ENCODE measurements at regions of chr6 and their contacts with region 1.

Region 1: GRCh38 chr6:144215932-144216667 is 65.8 kb downstream of the STX11 start:
- DNase-seq: peak; percentile 94 to 96
- H3K4me3 ChIP-seq: peak overlapping the region; percentile 33 to 50 (median 37)
- H3K27ac ChIP-seq: peak overlapping the region; percentile 95 to 100 (median 98)
- H3K4me1 ChIP-seq: peaks cover 35 to 37% of the 10 kb centered on the region in 2 donors
- H3K27me3 ChIP-seq: no peaks in the 10 kb centered on the region
- CTCF ChIP-seq: peak; percentile 55 to 83 (median 73)
- POLR2A ChIP-seq: peak in 1 of 2 donors; percentile 82

Region 2: GRCh38 chr6:143792402-143793279 is 423.5 kb before region 1 on chr6:
- intact Hi-C with region 1: no loop called
- DNase-seq: no peak
- H3K4me3 ChIP-seq: no peak overlapping the region
- H3K27ac ChIP-seq: no peak overlapping the region
- H3K4me1 ChIP-seq: no peaks in the 10 kb centered on the region
- H3K27me3 ChIP-seq: no peaks in the 10 kb centered on the region
- CTCF ChIP-seq: no peak
- POLR2A ChIP-seq: no peak

Region 3: DNA sequence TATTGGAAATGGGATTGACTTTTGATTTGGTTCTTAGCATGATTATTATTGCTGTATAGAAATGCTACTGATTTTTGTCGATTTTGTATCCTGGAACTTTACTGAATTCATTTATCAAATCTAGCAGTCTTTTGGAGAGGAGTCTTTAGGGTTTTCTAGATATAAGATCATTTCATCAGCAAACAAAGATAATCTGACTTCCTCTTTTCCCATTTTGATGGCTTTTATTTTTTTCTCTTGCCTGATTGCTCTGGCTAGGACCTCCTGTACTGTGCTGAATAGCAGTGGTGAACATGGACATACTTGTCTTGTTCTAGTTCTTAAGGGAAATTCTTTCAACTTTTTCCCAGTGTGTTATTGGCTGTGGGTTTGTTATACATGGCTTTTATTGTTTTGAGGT is 287.2 kb before region 1 on chr6:
- intact Hi-C with region 1: no loop called
- DNase-seq: no peak
- H3K4me3 ChIP-seq: no peak overlapping the region
- H3K27ac ChIP-seq: no peak overlapping the region
- H3K4me1 ChIP-seq: no peaks in the 10 kb centered on the region
- H3K27me3 ChIP-seq: no peaks in the 10 kb centered on the region
- CTCF ChIP-seq: no peak
- POLR2A ChIP-seq: no peak

Region 4: DNA sequence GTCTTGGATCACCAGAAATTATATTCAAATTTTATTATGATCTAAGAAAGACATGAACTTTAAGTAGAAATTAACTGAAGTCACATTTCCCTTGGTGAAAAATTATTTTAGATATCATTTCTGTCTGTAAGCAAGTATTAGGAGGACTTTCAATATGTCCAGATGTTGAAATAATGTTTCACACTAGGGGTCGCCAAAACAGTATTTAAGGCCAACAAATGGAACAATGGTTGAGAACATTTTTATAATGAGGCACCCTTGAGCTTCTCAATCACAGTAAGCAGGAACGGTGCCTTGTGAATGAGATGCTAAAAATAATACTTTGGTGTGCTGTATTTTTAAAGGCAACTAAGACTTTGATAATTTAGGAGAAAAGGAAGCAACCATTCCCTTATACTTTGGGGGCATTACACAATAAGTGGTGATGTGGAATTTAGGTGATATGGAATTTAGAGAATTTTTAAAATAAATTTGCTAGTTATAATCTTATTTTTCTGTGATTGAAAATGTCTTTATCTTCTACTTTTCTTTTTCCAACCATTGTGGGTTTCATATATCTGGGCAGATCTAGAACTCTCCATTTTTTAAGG is 111.1 kb before region 1 on chr6:
- intact Hi-C with region 1: loop called (anchors 5 kb)
- DNase-seq: peak; percentile 9 to 17
- H3K4me3 ChIP-seq: no peak overlapping the region
- H3K27ac ChIP-seq: peak overlapping the region; percentile 82 to 94 (median 83)
- H3K4me1 ChIP-seq: peaks cover 27 to 34% of the 10 kb centered on the region in 2 donors
- H3K27me3 ChIP-seq: no peaks in the 10 kb centered on the region
- CTCF ChIP-seq: peak in 5 of 6 experiments; percentile 57 to 96 (median 69)
- POLR2A ChIP-seq: no peak

Region 5: GRCh38 chr6:144493035-144493910 is 277.2 kb after region 1 on chr6:
- intact Hi-C with region 1: no loop called
- DNase-seq: no peak
- H3K4me3 ChIP-seq: no peak overlapping the region
- H3K27ac ChIP-seq: no peak overlapping the region
- H3K4me1 ChIP-seq: no peaks in the 10 kb centered on the region
- H3K27me3 ChIP-seq: no peaks in the 10 kb centered on the region
- CTCF ChIP-seq: no peak
- POLR2A ChIP-seq: no peak

Measured in thyroid gland (tissue), 4 donors.